Caco-2 (cell line): ENCODE measurements at regions of chr9 and their contacts with region 1.

Region 1: DNA sequence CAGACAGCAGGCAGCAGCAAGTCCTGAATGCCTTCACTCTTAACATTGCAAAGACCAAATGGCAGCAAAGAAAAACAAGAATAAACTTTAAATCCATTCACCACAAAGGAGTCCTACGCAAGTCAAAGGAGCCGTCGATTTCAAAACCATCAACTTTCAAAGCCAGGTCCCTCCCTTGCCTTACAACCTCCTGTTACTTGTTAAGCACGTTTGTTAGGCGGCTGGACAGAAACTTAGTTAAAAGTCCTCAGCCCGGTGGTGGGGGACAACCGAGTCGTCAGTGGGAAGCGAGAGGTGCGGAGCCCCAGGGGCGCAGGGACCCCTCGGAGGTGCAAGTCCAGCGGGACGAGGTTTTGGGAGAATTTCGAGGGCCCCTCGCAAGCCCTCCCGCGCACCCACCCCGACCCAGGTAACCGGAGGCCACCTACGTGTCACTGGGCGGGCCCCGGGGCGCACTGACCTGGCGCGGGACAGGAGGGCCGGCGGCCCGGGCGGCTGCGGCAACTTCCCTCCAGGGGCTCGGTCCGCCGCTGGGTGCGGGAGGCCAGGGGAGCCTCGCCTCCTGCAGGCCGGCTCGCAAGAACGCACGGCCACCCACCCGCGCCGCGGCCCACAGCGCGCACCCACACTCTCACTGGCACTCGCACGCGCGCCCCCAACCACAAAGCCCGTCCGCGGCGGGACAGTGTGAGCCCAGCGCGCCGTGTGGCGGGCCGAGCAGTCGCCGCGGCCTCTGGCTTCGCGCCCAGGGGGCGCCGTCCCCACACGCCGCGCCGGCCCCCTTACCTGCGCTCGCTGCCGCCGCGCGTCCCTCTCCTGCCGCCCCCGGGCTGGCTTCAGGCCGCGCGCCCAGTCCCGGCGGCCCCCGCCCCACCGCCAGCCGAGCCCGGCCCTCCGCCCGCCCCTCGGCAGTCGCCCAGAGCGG is 627 bp downstream of the LPAR1 start:
- DNase-seq: peak; percentile 60 to 82
- H3K4me3 ChIP-seq: peak overlapping the region; percentile 58
- H3K4me3 Mint-ChIP-seq: peak overlapping the region; percentile 100
- H3K27ac Mint-ChIP-seq: peak overlapping the region; percentile 95
- H3K4me1 ChIP-seq: peaks cover 9% of the 10 kb centered on the region; the same call in 1 of the 2 replicates
- H3K4me1 Mint-ChIP-seq: peaks cover 27% of the 10 kb centered on the region
- H3K27me3 ChIP-seq: no peaks in the 10 kb centered on the region
- H3K27me3 Mint-ChIP-seq: no peaks in the 10 kb centered on the region
- CTCF ChIP-seq: peak; percentile 37 to 41

Region 2: DNA sequence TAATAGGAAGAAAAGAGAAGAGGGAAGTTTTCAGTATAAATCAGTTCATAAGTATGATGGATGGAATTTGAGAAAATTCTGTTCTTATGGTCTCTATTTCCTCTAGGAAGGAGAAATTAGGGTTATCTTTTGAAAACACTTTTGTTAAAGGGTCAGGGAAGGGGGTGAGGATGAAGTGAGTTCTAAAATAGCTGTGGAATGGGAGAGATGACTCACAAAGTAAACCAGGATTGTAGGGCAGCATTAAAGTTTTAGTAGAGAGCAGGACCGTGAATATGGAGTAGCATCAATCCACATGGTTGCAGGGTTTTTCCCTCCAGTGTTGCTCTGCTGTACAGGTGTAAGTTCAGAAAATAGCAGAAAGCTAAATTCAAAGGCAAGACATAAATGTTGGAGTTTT is 336.7 kb before region 1 on chr9:
- CTCF ChIA-PET with region 1: no interaction called
- POLR2A ChIA-PET with region 1: interaction called, 12 read pairs
- intact Hi-C with region 1: no loop called
- DNase-seq: no peak
- H3K4me3 ChIP-seq: no peak overlapping the region
- H3K4me3 Mint-ChIP-seq: no peak overlapping the region
- H3K27ac Mint-ChIP-seq: no peak overlapping the region
- H3K4me1 ChIP-seq: 0 out of 2 replicates have a peak, but pooled peaks cover 5% of the 10 kb centered on the region
- H3K4me1 Mint-ChIP-seq: peaks cover 15% of the 10 kb centered on the region
- H3K27me3 ChIP-seq: no peaks in the 10 kb centered on the region
- H3K27me3 Mint-ChIP-seq: no peaks in the 10 kb centered on the region
- CTCF ChIP-seq: no peak

Region 3: GRCh38 chr9:110828264-110828663 is 209.4 kb before region 1 on chr9:
- CTCF ChIA-PET with region 1: no interaction called
- POLR2A ChIA-PET with region 1: no interaction called
- intact Hi-C with region 1: loop called (anchors 5 kb)
- DNase-seq: no peak
- H3K4me3 ChIP-seq: no peak overlapping the region
- H3K4me3 Mint-ChIP-seq: no peak overlapping the region
- H3K27ac Mint-ChIP-seq: peak overlapping the region; percentile 53
- H3K4me1 ChIP-seq: peaks cover 30% of the 10 kb centered on the region
- H3K4me1 Mint-ChIP-seq: peaks cover 37% of the 10 kb centered on the region
- H3K27me3 ChIP-seq: no peaks in the 10 kb centered on the region
- H3K27me3 Mint-ChIP-seq: no peaks in the 10 kb centered on the region
- CTCF ChIP-seq: no peak

Region 4: GRCh38 chr9:110911659-110912418 is 125.8 kb before region 1 on chr9:
- CTCF ChIA-PET with region 1: interaction called, 6 read pairs
- POLR2A ChIA-PET with region 1: no interaction called
- intact Hi-C with region 1: loop called (anchors 5 kb)
- DNase-seq: peak in 1 of 2 experiments; percentile 35
- H3K4me3 ChIP-seq: no peak overlapping the region
- H3K4me3 Mint-ChIP-seq: peak overlapping the region; percentile 59
- H3K27ac Mint-ChIP-seq: peak overlapping the region; percentile 68
- H3K4me1 ChIP-seq: peaks cover 32% of the 10 kb centered on the region
- H3K4me1 Mint-ChIP-seq: peaks cover 34% of the 10 kb centered on the region
- H3K27me3 ChIP-seq: no peaks in the 10 kb centered on the region
- H3K27me3 Mint-ChIP-seq: no peaks in the 10 kb centered on the region
- CTCF ChIP-seq: no peak

Region 5: DNA sequence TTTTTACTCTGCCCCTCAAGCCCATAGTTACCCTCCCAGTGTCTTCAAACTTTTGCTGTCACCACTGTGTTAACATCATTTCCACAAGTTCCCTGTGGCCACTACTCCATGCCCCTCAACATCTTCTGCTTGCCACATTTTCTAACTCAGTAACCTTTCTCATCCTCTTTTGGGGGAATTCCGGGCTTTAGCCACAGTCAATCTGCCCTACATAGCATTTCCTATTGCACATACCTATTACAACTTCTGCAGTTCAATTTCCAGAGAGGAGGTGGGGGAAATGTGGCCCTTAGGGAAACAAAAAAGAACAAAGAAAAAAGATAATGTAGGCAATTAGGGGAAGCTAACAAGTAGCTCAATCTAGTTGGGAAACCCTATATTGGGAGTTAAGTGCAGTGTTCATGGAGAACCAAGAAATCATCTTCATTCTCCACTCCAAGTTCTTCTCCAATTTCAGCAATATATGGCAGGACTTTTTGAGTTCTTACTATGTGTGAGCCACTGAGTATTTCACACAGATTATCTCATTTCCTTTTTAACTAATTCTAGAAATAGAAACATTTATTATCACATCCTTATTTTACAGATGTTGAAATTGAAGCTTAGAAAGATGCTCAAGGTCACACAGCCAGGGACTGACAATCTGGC is 40.9 kb after region 1 on chr9:
- CTCF ChIA-PET with region 1: no interaction called
- POLR2A ChIA-PET with region 1: no interaction called
- intact Hi-C with region 1: no loop called
- DNase-seq: no peak
- H3K4me3 ChIP-seq: no peak overlapping the region
- H3K4me3 Mint-ChIP-seq: no peak overlapping the region
- H3K27ac Mint-ChIP-seq: no peak overlapping the region
- H3K4me1 ChIP-seq: no peaks in the 10 kb centered on the region
- H3K4me1 Mint-ChIP-seq: no peaks in the 10 kb centered on the region
- H3K27me3 ChIP-seq: no peaks in the 10 kb centered on the region
- H3K27me3 Mint-ChIP-seq: peaks cover 5% of the 10 kb centered on the region
- CTCF ChIP-seq: no peak

Region 6: DNA sequence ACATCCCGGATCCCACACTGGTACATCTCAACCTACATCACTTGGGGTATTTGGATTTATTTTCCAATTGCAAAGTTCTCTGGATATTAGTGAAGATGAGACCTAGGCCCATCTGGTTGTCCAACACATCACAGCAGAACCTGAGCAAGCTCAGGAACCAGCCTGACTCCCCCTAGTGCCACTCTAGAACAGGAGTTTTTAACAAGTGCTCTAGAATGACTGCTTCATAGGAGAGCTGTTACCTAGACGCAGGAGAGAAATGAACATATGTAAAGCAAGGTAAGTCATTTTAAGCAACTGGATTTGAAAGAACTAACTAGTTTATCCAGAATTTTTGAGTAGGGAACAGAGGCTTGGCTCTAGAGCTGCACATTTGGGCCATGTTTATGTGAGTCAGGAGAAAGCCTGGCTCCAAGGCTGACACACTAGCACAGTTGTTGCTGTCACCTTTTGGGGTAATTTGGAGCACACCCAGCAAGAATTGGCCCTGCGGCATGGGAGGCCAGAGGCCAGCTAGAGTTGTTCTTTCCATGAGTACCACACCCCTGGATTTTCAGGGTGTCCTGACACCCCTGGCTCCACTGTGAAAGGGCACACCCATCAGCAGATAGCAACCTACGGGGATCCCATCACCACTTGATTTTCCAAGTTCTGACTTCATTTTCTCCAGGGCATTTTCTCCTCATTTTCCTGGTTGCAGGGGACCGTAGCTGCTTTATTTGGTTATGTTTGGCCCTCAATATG is 111.5 kb after region 1 on chr9:
- CTCF ChIA-PET with region 1: interaction called, 4 read pairs
- POLR2A ChIA-PET with region 1: no interaction called
- intact Hi-C with region 1: loop called (anchors 2 kb)
- DNase-seq: peak in 1 of 2 experiments; percentile 8
- H3K4me3 ChIP-seq: no peak overlapping the region
- H3K4me3 Mint-ChIP-seq: no peak overlapping the region
- H3K27ac Mint-ChIP-seq: no peak overlapping the region
- H3K4me1 ChIP-seq: no peaks in the 10 kb centered on the region
- H3K4me1 Mint-ChIP-seq: no peaks in the 10 kb centered on the region
- H3K27me3 ChIP-seq: no peaks in the 10 kb centered on the region
- H3K27me3 Mint-ChIP-seq: peaks cover 6% of the 10 kb centered on the region
- CTCF ChIP-seq: peak in 1 of 2 experiments; percentile 28

Region 7: DNA sequence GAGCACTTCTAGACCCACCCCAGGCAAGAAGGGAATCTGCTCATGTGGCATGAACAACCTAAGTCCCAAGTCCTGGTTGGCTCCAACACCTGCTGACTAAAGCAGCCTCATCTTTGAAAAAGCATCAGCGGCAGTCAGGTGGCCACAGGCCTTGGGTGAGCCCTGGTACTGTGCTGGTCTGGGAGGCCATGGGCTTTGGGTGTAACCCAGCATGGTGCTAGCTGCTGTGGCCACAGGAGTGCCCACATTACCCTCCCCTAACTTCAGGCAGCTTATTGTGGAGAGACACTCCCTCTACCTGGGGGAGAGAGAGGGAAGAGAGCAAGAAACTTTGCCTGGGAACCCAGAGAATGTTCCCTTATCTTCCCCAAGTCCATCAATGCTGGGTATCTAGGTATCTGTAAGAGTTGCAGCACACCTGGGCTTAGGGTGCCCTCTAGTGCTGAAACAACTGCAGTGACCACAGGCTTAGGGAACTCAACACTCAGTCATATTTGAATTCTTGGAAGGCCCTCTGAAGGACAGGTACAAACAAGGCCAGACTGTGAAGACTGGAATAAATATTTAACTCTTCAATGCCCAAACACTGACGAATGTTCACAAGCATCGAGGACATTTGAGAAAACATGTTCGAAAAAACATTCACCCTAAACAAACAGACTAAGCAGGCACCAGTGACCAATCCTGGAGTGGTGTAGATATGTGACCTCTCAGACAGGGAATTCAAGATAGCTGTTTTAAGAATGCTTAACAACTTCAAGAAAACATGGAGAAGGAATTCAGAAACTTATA is 362.3 kb after region 1 on chr9:
- CTCF ChIA-PET with region 1: no interaction called
- POLR2A ChIA-PET with region 1: no interaction called
- intact Hi-C with region 1: loop called (anchors 2 kb)
- DNase-seq: peak; percentile 64 to 66
- H3K4me3 ChIP-seq: no peak overlapping the region
- H3K4me3 Mint-ChIP-seq: no peak overlapping the region
- H3K27ac Mint-ChIP-seq: peak overlapping the region; percentile 68
- H3K4me1 ChIP-seq: no peaks in the 10 kb centered on the region
- H3K4me1 Mint-ChIP-seq: peaks cover 12% of the 10 kb centered on the region
- H3K27me3 ChIP-seq: no peaks in the 10 kb centered on the region
- H3K27me3 Mint-ChIP-seq: no peaks in the 10 kb centered on the region
- CTCF ChIP-seq: peak; percentile 66 to 70